Thyroid gland (tissue), 4 donors: ENCODE measurements at regions of chr12 and their contacts with region 1.

Region 1: DNA sequence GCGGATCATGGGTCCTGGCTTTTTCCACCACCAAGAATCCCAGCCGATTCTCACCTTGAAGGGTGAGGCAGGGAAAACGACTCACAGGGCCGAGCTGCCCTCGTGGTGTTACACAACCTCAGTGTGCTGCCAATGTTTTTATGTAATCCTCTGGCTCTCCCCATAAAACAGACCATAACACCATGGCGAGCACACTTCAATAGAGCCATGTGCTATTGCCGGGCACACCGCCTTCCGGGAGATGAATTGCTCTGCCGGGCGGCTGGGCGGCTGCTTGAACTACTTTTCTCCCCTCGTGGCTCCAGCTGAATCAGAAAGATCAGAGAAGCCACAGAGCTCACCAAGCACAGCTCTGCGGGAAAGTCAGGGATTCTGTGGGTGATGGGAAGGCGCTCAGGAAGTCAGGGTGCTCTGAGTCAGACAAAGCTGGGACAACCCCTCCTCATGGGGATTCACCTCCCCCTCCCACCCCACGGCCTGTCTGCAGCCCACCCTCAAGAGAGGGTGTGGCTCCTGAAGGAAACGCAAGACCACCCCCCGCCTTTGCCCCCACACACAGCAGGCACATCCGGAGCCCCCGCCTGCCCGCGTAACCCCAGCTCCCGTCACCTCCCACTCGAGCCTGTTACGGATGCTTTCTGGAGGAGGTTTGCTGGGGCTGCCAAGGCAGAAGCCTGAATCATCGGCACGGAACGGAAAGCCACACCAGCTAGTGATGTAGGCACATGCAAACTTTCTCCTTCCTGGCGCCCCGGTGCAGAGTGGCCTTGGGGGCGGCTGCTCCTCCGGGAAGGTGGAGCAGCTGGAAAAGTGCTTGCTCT is 1.8 kb downstream of the GALNT9 start:
- DNase-seq: peak; percentile 82 to 84
- H3K4me3 ChIP-seq: no peak overlapping the region
- H3K27ac ChIP-seq: peak overlapping the region in 1 of 3 donors; percentile 63
- H3K4me1 ChIP-seq: peaks cover 42 to 64% of the 10 kb centered on the region in 2 donors
- H3K27me3 ChIP-seq: peaks cover 6% of the 10 kb centered on the region
- CTCF ChIP-seq: no peak
- POLR2A ChIP-seq: no peak

Region 2: DNA sequence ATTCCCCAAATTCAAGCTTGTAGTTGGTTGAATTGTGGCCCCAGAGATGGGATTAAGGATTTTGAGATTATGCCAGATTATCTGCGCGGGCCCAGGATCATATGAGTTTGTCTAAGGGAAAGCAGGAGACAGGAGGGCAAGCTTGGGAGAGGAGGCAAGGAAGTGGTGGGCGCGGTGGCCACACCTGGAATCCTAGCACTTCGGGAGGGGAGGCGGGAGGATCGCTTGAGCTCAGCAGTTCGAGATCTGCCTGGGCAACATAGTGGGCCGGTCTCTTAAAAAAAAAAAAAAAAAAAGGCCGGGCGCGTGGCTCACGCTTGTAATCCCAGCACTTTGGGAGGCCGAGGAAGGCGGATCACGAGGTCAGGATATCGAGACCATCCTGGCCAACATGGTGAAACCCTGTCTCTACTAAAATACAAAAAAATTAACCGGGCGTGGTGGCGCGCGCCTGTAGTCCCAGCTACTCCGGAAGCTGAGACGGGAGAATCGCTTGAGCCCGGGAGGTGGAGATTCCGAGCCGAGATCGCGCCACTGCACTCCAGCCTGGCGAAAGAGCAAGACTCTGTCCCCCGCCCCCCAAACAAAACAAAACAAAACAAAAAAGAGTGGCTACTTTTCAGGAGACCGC is 399.4 kb before region 1 on chr12:
- intact Hi-C with region 1: no loop called
- DNase-seq: no peak
- H3K4me3 ChIP-seq: peak overlapping the region; percentile 14 to 62 (median 60)
- H3K27ac ChIP-seq: peak overlapping the region; percentile 49 to 86 (median 64)
- H3K4me1 ChIP-seq: peaks cover 7 to 12% of the 10 kb centered on the region in 2 donors
- H3K27me3 ChIP-seq: no peaks in the 10 kb centered on the region
- CTCF ChIP-seq: no peak
- POLR2A ChIP-seq: no peak

Region 3: DNA sequence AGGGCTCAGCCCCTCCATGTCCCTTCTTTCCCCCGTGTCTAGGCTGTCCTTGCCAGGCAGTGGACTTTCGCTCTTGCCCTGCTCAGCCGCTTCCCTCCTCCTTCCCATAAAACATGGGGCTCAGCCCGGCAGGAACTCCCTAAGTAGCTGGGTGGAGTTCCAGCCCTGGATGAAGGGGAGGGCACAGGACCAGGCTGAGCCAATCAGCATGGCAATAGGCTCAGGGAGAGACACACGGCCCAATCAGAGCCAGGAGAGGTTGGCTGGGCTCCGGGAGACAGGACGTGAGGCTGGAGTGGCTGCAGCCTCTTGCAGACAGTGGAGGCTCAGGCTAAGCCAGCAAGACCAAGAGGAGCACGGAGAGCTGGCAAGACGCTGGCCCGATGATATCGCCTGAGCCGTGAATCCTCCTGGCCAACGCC is 52.4 kb before region 1 on chr12:
- intact Hi-C with region 1: loop called (anchors 10 kb)
- DNase-seq: peak; percentile 44 to 59
- H3K4me3 ChIP-seq: no peak overlapping the region
- H3K27ac ChIP-seq: peak overlapping the region in 2 of 3 donors; percentile 36 to 96
- H3K4me1 ChIP-seq: peaks cover 62 to 67% of the 10 kb centered on the region in 2 donors
- H3K27me3 ChIP-seq: no peaks in the 10 kb centered on the region
- CTCF ChIP-seq: no peak
- POLR2A ChIP-seq: no peak

Region 4: DNA sequence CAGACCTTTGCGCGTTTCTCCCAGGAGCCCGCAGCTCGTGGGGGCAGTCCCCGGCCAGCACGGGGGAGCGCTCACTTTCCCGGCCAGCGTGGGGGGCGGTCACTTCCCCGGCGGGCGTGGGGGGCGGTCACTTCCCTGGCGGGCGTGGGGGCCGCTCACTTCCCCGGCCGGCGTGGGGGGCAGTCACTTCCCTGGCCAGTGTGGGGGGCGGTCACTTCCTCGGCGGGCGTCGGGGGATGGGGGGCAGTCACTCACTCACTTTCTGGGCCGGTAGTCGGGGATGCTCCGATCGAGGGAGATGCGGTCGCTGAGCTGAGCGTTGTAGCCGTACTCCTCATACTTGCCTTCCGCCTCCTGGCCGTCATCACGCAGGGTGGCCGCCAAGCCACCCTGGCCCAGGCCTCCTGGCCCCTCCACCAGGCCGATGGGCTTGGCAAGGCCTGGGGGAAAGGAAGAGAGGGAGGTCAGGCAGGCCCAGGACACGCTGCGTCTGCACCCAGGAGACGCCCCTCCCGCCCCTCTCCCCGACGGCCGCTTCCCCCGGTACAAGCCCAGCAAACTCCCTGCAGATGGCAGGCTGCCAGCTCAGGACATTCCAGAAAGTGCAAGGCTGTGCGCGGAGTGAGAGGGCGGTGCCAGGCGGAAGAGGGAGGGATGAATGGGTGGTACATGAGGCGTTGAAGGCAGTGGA is 41.4 kb before region 1 on chr12:
- intact Hi-C with region 1: no loop called
- DNase-seq: peak; percentile 96
- H3K4me3 ChIP-seq: no peak overlapping the region
- H3K27ac ChIP-seq: peak overlapping the region in 2 of 3 donors; percentile 46 to 66
- H3K4me1 ChIP-seq: peaks cover 16 to 45% of the 10 kb centered on the region in 2 donors
- H3K27me3 ChIP-seq: no peaks in the 10 kb centered on the region
- CTCF ChIP-seq: no peak
- POLR2A ChIP-seq: no peak